ENCODE measurements at regions of chr6 and their contacts with region 1.

Region 1: GRCh38 chr6:135438907-135439535 is 58.5 kb downstream of the AHI1 start:
- ATAC-seq: peak in 1 of 8 experiments; percentile 30
- H3K4me3 ChIP-seq: no peak overlapping the region
- H3K27ac ChIP-seq: no peak overlapping the region
- H3K4me1 ChIP-seq: no peaks in the 10 kb centered on the region

Region 2: DNA sequence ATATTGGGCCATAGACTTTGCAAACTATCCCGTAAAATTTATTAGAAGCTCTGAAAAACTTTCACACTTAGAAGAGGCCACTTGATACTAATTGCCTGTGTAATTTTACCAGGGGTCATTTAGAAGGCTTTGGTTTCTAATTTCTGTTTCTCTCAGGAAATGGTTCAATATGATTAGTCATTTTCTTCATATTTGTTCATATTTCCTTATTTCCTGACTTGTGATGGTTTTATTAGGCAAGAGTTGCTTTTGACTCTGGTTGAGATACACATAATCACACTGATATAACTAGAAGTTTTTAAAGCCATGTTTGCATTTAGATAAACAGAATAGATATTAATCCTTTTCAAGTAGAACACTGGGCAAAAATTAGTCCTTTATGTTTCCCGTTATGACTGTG is 372.6 kb before region 1 on chr6:
- in situ Hi-C with region 1: no loop called
- ATAC-seq: no peak
- H3K4me3 ChIP-seq: no peak overlapping the region
- H3K27ac ChIP-seq: no peak overlapping the region
- H3K4me1 ChIP-seq: no peaks in the 10 kb centered on the region

Region 3: GRCh38 chr6:135145063-135145800 is 293.8 kb before region 1 on chr6:
- in situ Hi-C with region 1: loop called in 1 of 9 experiments (anchors 25 kb)
- ATAC-seq: peak in 2 of 8 experiments; percentile 29 to 38
- H3K4me3 ChIP-seq: no peak overlapping the region
- H3K27ac ChIP-seq: no peak overlapping the region
- H3K4me1 ChIP-seq: no peaks in the 10 kb centered on the region

Region 4: GRCh38 chr6:135540207-135540840 is 101.3 kb after region 1 on chr6:
- in situ Hi-C with region 1: no loop called
- ATAC-seq: peak in 3 of 8 experiments; percentile 17 to 50 (median 30)
- H3K4me3 ChIP-seq: no peak overlapping the region
- H3K27ac ChIP-seq: no peak overlapping the region
- H3K4me1 ChIP-seq: no peaks in the 10 kb centered on the region

Measured in motor neuron (in vitro differentiated cells).